ENCODE measurements at regions of chr21 and their contacts with region 1.

Region 1: DNA sequence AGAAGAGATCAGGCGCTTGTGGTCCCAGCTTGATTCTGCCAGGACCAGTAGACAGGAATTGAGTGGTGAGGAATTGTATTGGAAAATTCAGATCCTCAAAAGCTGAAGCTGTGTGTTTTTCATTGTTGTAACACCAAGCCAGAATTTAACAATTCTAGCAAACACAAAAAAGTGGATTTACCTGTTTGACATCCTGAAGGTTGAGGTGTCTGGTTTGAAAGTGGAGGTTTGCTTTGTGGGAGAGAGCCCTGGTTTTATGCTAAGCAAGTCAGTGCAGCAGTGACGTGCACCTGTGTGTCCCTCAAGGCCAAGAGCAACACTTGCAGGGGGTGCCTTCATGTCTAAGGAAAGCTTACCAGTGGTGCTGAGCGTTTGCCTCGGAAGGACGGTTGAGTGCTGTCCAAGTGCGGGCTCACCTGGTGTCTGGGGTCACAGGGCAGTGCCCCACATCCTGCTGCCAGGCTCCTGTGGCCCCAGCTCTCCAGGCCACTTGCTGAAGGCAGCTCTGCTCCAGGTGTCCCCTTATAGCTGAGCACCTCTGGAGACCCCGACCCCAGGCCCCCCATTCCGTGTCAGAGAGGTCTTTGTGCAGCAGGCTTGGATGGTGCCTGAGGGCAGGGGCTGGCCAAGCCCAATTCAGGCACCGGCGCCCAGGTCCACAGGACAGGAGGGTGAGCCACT is 27.7 kb downstream of the PCNT start:
- DNase-seq: no peak
- H3K4me3 ChIP-seq: no peak overlapping the region
- H3K27ac ChIP-seq: no peak overlapping the region
- H3K4me1 ChIP-seq: no peaks in the 10 kb centered on the region
- H3K27me3 ChIP-seq: no peaks in the 10 kb centered on the region
- CTCF ChIP-seq: no peak

Region 2: DNA sequence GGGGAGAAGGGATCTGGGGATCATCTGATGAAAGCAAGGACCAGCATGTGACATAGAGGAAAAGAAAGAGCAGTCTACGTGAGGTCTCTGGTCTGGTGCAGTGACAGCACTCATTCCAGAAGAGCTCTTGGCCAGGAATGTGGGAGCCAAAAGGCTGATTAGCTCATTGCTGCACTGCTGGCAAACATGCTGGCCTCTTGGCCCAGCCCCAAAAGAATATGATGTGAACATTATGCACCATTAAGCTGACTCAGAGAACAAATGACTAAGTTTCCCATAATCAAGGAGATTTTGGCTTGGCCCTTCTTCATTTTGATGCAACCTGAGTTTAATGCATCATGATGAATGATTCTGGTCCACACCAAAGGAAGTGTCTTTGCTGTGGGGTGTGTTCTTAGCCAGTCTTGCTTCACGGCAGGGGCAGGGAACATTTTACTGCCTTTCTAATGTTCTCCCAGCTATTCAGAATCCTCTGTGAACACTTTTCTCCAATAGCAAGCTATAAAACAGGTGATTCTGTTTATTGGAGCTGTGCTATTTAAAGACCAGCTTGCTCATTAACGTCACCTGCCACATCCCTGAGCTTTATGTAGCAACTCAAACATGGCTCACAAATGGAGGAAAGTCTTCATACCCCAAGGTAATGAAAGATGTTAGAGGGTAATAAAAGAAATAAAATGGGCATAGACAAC is 653.0 kb before region 1 on chr21:
- CTCF ChIA-PET with region 1: no interaction called
- dilution Hi-C with region 1: no loop called
- in situ Hi-C with region 1: no loop called
- intact Hi-C with region 1: no loop called
- DNase-seq: peak; percentile 89
- H3K4me3 ChIP-seq: no peak overlapping the region
- H3K27ac ChIP-seq: no peak overlapping the region
- H3K4me1 ChIP-seq: peaks cover 13% of the 10 kb centered on the region
- H3K27me3 ChIP-seq: no peaks in the 10 kb centered on the region
- CTCF ChIP-seq: no peak

Region 3: DNA sequence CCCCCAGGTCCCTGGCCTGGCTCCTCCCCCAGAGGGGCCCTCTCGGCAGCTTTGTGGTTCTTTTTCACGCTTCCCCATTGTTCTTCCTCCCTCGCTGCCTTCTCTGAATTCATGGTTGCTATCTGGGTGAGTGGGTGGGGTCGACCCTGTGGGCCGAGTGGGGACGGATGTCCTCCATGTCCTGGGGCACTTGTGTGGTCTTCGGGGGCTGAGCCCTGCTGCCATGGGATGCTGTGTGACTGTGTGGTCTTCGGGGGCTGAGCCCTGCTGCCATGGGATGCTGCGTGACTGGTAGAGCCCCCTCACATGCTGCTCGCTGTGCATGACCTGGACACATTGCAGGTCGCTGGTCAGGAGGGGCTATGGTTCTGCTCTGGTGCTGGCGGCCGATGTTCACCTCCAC is 85.5 kb after region 1 on chr21:
- CTCF ChIA-PET with region 1: no interaction called
- dilution Hi-C with region 1: loop called (anchors 5 kb)
- in situ Hi-C with region 1: no loop called
- intact Hi-C with region 1: no loop called
- DNase-seq: no peak
- H3K4me3 ChIP-seq: no peak overlapping the region
- H3K27ac ChIP-seq: no peak overlapping the region
- H3K4me1 ChIP-seq: no peaks in the 10 kb centered on the region
- H3K27me3 ChIP-seq: no peaks in the 10 kb centered on the region
- CTCF ChIP-seq: no peak

Measured in mammary epithelial cell (primary cell).